Activated CD4-positive, alpha-beta T cell treated with anti-CD3 and anti-CD28 coated beads, Interleukin-2, amount 10 ng/mL, durations not matched to agents 7 days and 5 days (primary cell): ENCODE measurements at regions of chr11 and their contacts with region 1.

Region 1: DNA sequence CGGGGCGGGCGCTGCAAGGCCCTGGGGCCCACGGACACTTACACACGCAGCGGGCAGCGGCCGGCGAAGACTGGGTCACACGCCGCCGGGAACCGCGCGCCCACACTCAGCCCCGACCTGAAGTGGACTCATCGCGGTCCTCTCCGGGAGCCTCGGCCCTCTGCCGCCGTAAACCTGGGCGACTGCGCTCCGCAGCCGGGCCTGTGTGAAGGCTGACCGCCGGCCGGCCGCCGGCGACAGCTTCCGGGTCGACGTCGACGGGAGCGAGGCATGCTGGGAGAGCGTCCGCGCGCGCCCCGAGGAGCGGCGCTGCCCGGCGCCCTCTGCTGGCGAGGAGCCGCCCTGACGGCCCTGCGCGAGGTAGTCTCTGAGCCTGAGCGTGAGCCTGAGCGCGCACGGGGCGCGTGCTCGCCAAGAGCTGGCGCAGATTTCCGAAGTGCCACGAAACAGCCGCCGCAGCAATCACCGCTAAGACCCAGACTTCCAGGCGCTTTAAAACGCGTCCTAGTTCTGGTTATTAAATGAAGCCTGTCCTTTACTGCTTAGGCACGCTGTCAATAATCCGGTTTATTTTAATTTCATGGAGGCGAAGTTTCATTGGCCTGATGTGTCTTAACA is at the start of gene SNX19:
- DNase-seq: peak; percentile 91
- H3K4me3 Mint-ChIP-seq: peak within 1 kb of the TSS; percentile 81
- H3K27ac Mint-ChIP-seq: peak within 1 kb of the TSS; percentile 91
- H3K4me1 Mint-ChIP-seq: peaks cover 35% of the 10 kb centered on the region
- H3K27me3 Mint-ChIP-seq: no peaks in the 10 kb centered on the region
- total RNA-seq, gene SNX19: 41.7 to 43.7 TPM

Region 2: GRCh38 chr11:130434521-130435223 is 481.7 kb before region 1 on chr11:
- CTCF ChIA-PET with region 1: interaction called, 12 read pairs
- POLR2A ChIA-PET with region 1: no interaction called
- DNase-seq: peak; percentile 75
- H3K4me3 Mint-ChIP-seq: no peak overlapping the region
- H3K27ac Mint-ChIP-seq: no peak overlapping the region
- H3K4me1 Mint-ChIP-seq: peaks cover 27% of the 10 kb centered on the region
- H3K27me3 Mint-ChIP-seq: peaks cover 15% of the 10 kb centered on the region

Region 3: GRCh38 chr11:130899106-130899505 is 17.2 kb before region 1 on chr11:
- CTCF ChIA-PET with region 1: interaction called, 12 read pairs
- POLR2A ChIA-PET with region 1: no interaction called
- DNase-seq: no peak
- H3K4me3 Mint-ChIP-seq: no peak overlapping the region
- H3K27ac Mint-ChIP-seq: no peak overlapping the region
- H3K4me1 Mint-ChIP-seq: peaks cover 7% of the 10 kb centered on the region
- H3K27me3 Mint-ChIP-seq: no peaks in the 10 kb centered on the region